Activated T-helper 1 cell treated with anti-CD3 and anti-CD28 coated beads, Interleukin-12 subunit alpha, Interleukin-12 subunit beta, Interleukin-2, Interleukin-4 antibody, amounts not matched to agents 30 ng/mL and 10 ng/mL and 1 ng/mL, durations not matched to agents 14 hours and 24 hours and 36 hours (primary cell): ENCODE measurements at regions of chr5 and their contacts with region 1.

Region 1: DNA sequence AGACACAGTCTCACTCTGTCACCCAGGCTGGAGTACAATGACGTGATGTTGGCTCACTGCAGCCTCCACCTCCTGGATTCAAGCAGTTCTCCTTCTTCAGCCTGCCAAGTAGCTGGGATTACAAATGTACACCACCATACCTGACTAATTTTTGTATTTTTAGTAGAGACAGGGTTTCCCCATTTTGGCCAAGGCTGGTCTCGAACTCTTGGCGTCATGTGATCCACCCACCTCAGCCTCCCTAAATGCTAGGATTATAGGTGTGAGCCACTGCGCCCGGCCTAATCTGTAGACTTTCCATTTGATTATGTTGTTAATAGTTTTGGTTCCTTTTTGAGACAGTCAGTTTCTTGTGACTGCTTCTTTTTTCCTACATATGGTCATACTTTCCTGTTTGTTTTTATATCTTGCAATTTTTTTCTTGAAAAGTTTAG is 31.0 kb downstream of the MTREX start:
- DNase-seq: no peak
- H3K4me3 Mint-ChIP-seq: peak overlapping the region; percentile 37
- H3K27ac Mint-ChIP-seq: peak overlapping the region; percentile 87
- H3K4me1 Mint-ChIP-seq: peaks cover 22% of the 10 kb centered on the region
- H3K27me3 Mint-ChIP-seq: no peaks in the 10 kb centered on the region

Region 2: DNA sequence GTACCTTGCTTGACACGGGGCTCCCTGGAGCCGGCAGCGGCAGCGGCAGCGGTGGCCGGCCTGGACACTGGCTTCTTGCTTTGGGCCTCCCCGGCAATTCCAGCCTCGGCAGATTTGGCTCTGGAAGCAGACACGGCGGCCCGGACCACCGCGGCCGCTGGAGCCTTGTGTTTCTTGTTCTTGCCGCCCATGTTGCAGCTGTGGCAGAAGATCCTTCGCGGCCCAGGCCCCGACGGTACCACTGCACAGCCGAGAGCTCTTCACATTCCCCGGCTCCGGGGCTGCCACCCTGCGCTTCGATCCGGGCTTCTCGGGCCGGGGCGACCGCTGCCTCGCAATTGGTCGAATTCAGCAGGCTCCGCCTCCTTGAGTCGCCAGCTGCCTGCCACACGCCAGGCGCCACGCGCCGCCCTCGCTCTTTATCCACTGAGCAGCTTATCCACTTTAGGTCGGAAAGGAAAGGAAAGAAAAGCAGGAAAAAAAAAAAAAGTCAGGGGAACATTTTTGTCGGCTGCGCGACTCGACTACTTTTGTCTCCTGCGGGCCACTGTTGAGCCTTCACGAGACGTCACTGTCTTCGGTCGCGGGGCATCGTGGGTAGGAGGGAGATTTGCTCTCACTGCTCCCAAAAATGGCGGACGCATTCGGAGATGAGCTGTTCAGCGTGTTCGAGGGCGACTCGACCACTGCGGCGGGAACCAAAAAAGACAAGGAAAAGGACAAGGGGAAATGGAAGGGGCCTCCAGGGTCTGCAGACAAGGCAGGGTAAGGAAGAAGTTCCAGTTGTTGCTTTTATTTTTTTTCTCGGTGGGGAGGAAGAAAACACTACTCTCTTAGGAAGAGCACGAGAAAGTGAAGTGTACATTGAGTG is 31.2 kb before region 1 on chr5 and contains the starts of genes DHX29 and MTREX:
- intact Hi-C with region 1: loop called (anchors 1 kb)
- DNase-seq: peak; percentile 89
- H3K4me3 Mint-ChIP-seq: no peak within 1 kb of the TSS
- H3K27ac Mint-ChIP-seq: no peak within 1 kb of the TSS
- H3K4me1 Mint-ChIP-seq: peaks cover 19% of the 10 kb centered on the region
- H3K27me3 Mint-ChIP-seq: no peaks in the 10 kb centered on the region
- total RNA-seq, gene DHX29: 20.3 and 22.3 TPM in 2 replicates
- total RNA-seq, gene MTREX: 110 and 122 TPM in 2 replicates

Region 3: DNA sequence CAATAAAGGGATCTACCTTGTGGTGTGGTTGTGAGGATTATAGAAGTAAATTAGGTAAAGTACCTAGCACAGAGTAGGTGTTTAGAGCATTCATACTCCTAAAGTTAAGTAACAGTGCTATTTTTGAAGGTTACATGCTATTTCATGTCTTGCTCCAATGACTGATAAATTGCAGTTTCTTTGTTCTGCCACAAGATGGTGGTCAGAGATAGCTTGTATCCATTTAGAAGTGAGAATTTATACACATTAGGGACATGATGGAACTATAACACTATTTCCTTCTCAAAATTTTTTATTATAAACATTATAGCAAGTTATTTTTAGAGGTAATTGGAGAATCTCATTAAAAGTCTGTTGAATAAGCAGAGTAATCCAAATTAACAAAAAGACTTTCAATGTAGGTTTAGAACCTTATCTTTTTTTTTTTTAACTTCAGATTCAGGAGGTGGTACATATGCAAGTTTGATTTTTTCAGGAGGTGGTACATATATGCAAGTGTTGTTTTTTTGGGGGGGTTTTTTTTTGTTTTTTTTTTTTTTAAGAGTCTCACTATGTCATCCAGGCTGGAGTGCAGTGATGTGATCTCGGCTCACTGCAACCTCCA is 13.9 kb before region 1 on chr5:
- intact Hi-C with region 1: loop called (anchors 1 kb)
- DNase-seq: no peak
- H3K4me3 Mint-ChIP-seq: no peak overlapping the region
- H3K27ac Mint-ChIP-seq: no peak overlapping the region
- H3K4me1 Mint-ChIP-seq: peaks cover 21% of the 10 kb centered on the region
- H3K27me3 Mint-ChIP-seq: no peaks in the 10 kb centered on the region

Region 4: GRCh38 chr5:55364537-55365055 is 25.8 kb after region 1 on chr5:
- intact Hi-C with region 1: loop called (anchors 1 kb)
- DNase-seq: no peak
- H3K4me3 Mint-ChIP-seq: no peak overlapping the region
- H3K27ac Mint-ChIP-seq: peak overlapping the region; percentile 32
- H3K4me1 Mint-ChIP-seq: peaks cover 14% of the 10 kb centered on the region
- H3K27me3 Mint-ChIP-seq: no peaks in the 10 kb centered on the region

Region 5: DNA sequence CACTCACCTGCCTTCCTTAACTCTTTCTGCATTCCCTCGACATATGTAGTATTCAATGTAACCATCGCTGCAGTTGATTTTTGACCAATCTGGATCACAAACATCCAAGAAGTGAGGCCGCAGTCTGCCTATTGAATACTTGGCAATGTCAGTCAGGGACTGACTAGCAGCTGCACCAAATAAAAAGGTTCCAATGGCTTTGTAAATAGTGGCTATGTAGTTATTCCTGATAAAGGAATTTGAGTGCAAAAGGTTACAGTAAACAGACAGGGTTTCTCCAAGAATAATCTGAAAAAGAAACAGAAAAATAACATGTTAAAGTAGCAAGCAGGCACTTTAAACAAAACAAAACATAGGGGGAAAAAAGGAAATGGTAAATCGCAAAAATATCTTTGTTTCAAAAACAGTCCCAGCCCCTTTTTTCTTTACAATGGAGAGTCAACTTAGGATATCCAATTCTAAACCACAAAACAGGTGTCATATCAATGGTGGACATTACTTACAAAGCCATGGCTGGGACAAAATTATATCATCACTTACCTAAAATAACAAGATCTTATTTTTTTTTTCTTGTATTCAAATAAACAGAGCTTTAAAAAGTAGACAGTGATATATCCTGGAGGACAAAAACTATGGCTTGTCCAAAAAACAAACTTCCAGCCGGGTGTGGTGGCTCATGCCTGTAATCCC is 129.2 kb after region 1 on chr5:
- intact Hi-C with region 1: no loop called
- DNase-seq: no peak
- H3K4me3 Mint-ChIP-seq: no peak overlapping the region
- H3K27ac Mint-ChIP-seq: no peak overlapping the region
- H3K4me1 Mint-ChIP-seq: peaks cover 16% of the 10 kb centered on the region
- H3K27me3 Mint-ChIP-seq: no peaks in the 10 kb centered on the region